ENCODE measurements at regions of chr3 and their contacts with region 1.

Region 1: DNA sequence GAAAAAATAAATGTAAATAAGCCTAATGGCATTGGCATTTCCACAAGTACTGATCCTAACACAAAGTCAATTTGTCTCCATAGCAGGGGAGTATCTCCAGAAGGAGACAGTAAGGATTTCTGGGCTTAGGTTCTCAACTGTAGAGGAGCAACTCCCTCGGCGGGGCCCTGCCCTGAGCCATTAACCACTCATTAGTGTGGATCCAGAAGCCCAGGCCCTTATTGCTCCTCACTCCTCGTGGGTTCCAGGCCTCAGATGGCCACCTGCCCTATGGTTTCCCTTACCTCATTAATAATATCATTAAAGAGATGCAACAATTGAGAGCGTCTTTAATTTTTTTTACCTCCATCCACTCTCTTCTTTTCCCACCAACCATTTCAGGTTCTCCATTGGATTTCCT is 85.3 kb upstream of the CLDN18 start:
- DNase-seq: no peak

Region 2: GRCh38 chr3:137987723-137988122 is 63.1 kb after region 1 on chr3:
- intact Hi-C with region 1: no loop called
- DNase-seq: no peak

Region 3: GRCh38 chr3:138314751-138315150 is 390.1 kb after region 1 on chr3:
- intact Hi-C with region 1: loop called in 1 of 2 experiments (anchors 5 kb)
- DNase-seq: no peak